Activated T-helper 1 cell treated with anti-CD3 and anti-CD28 coated beads, Interleukin-12 subunit alpha, Interleukin-12 subunit beta, Interleukin-2, Interleukin-4 antibody, amounts not matched to agents 30 ng/mL and 10 ng/mL and 1 ng/mL, durations not matched to agents 14 hours and 24 hours and 36 hours (primary cell): ENCODE measurements at regions of chr3 and their contacts with region 1.

Region 1: DNA sequence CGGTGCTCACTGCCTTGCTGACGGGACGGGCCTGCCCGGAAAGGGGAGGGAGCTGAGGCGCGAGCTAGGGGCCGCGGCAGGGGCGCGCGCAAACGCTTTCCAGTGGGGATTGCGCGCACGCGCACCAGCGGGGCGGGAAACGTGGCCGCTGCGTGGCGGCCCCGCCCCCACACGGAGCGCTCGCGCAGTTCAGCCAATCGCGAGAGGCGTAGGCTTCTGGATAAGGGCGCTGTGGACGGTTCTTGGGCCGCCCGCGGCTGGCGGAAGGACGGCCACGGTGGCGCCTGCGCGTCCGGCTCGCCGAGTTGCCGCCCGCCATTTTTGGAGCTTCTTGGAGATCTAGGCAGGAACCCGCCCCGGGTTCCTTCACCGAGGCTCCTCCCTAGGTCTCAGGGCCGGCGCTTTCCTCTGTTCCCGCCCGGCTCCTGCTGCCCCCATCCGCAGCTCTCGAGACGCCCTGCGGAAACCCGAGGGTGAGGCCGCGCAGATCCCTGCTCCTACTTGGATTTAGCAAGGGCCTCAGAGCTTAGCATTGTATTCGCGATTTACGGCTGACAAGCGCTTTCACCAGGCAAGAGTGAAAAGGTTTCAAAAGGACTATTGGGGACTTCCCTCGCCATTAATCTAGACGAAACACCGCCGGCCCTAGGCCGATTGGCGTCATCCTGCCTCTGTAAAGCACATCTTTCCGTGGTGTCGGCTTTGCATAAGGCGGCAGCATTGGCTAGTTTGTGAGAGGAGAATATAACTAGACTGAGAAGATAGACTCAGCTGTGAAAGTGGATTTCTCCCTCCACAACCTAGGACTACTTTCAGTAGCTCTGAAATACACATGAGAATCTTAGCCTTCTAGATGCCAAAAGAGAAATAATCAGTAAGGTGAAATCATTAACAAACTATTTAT is 496 bp upstream of the STAG1 start:
- DNase-seq: peak; percentile 99
- H3K4me3 Mint-ChIP-seq: peak overlapping the region; percentile 86
- H3K27ac Mint-ChIP-seq: peak overlapping the region; percentile 96
- H3K4me1 Mint-ChIP-seq: peaks cover 43% of the 10 kb centered on the region
- H3K27me3 Mint-ChIP-seq: no peaks in the 10 kb centered on the region

Region 2: GRCh38 chr3:136250226-136250902 is 502.3 kb before region 1 on chr3 and contains the start of gene PCCB:
- intact Hi-C with region 1: loop called (anchors 1 kb)
- DNase-seq: peak; percentile 88
- H3K4me3 Mint-ChIP-seq: peak within 1 kb of the TSS; percentile 89
- H3K27ac Mint-ChIP-seq: peak within 1 kb of the TSS; percentile 91
- H3K4me1 Mint-ChIP-seq: peaks cover 21% of the 10 kb centered on the region
- H3K27me3 Mint-ChIP-seq: no peaks in the 10 kb centered on the region
- total RNA-seq, gene PCCB: 41.4 and 41.7 TPM in 2 replicates

Region 3: DNA sequence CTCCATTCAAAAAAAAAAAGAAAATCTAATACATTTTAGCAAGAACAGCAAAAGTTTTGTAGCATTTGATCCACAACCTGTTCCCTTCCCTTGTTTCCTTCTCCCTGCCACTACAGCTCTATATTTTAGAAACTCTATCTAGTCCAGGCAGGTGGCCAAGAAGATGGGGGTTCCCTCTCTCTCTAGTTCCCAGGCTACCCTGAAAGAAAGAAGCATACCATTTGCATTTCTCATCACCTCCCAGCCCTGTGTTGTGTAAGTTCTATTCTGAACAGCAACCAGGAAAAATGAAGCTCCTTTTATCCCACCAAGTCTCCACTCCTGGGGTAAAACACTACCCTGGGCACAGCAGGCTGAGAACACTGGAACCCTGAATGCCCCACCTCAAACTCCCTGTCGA is 402.5 kb before region 1 on chr3:
- intact Hi-C with region 1: loop called (anchors 2 kb)
- DNase-seq: no peak
- H3K4me3 Mint-ChIP-seq: no peak overlapping the region
- H3K27ac Mint-ChIP-seq: no peak overlapping the region
- H3K4me1 Mint-ChIP-seq: peaks cover 20% of the 10 kb centered on the region
- H3K27me3 Mint-ChIP-seq: no peaks in the 10 kb centered on the region

Region 4: DNA sequence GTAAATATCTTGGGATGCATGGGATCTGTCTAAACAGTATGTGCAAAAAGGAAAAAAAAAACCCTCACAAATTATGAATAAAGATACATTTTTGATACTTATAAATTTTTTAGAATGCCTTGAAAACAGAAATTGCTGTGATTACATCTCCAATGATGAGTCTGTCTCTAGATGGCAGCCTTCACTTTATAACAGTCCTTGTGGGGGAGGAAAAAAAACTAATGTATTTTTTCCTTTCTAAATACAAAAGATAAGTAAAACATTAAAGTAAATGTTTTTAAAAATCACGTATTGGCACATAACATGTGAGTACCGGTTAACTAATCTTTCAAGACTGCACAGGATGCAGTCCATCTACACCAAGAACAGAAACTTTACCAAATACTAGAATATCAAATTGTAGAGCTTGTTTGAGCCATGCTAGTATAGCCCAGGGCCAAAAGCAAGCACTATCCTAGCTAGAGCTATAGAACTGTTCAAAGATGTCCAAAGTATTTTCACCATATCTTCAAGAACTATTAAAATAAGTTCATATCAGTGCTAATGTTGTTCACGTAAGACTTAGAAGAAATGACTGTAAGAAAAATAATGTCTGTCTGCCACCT is 206.9 kb before region 1 on chr3:
- intact Hi-C with region 1: loop called (anchors 2 kb)
- DNase-seq: no peak
- H3K4me3 Mint-ChIP-seq: no peak overlapping the region
- H3K27ac Mint-ChIP-seq: no peak overlapping the region
- H3K4me1 Mint-ChIP-seq: no peaks in the 10 kb centered on the region
- H3K27me3 Mint-ChIP-seq: no peaks in the 10 kb centered on the region

Region 5: GRCh38 chr3:136787349-136787748 is 34.7 kb after region 1 on chr3:
- intact Hi-C with region 1: loop called (anchors 1 kb)
- DNase-seq: peak; percentile 28
- H3K4me3 Mint-ChIP-seq: peak overlapping the region; percentile 48
- H3K27ac Mint-ChIP-seq: peak overlapping the region; percentile 71
- H3K4me1 Mint-ChIP-seq: peaks cover 16% of the 10 kb centered on the region
- H3K27me3 Mint-ChIP-seq: peaks cover 1% of the 10 kb centered on the region

Region 6: GRCh38 chr3:136861890-136862616 is 109.4 kb after region 1 on chr3 and contains the start of gene NCK1:
- intact Hi-C with region 1: loop called (anchors 1 kb)
- DNase-seq: peak; percentile 98
- H3K4me3 Mint-ChIP-seq: peak within 1 kb of the TSS; percentile 97
- H3K27ac Mint-ChIP-seq: peak within 1 kb of the TSS; percentile 99
- H3K4me1 Mint-ChIP-seq: peaks cover 55% of the 10 kb centered on the region
- H3K27me3 Mint-ChIP-seq: no peaks in the 10 kb centered on the region
- total RNA-seq, gene NCK1: 33.2 and 33.4 TPM in 2 replicates

Region 7: DNA sequence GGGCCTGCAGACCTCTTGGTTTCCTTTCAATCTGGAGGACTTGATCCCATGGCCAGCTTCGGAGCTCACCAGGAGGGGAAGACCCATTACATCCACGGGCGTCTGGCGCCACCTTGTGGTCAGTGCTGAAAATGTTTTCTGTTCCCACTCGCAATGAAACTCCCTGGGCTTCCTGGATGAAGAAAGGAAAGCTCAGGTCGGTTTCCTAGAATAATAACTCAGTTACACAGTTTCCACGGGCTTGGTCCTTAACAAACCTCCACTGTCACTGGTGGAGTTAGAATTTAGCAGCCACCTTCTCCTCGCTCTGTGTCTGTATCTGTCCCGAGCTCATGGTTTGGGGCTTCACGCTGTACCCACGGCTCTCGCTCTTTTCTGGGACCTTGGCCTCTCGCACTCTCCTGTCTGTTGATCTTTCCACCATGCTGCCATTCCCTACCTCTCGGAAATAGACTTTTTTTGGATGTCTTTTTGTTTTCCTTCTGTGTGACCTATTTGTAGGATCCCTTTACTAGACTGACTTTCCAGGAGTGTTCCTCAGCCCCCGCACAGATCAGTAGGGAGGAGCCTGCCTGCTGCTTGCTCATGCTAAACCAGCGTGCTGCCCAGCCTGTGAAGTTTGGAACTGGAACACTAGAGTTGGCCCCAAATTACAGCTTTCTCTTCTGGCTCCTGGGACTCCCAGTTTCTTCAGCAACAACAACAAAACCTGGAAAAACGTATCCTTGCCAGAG is 261.4 kb after region 1 on chr3:
- intact Hi-C with region 1: loop called (anchors 1 kb)
- DNase-seq: peak; percentile 72
- H3K4me3 Mint-ChIP-seq: peak overlapping the region; percentile 78
- H3K27ac Mint-ChIP-seq: no peak overlapping the region
- H3K4me1 Mint-ChIP-seq: peaks cover 10% of the 10 kb centered on the region
- H3K27me3 Mint-ChIP-seq: no peaks in the 10 kb centered on the region